OCI-LY7 (cell line): ENCODE measurements at regions of chr1 and their contacts with region 1.

Region 1: DNA sequence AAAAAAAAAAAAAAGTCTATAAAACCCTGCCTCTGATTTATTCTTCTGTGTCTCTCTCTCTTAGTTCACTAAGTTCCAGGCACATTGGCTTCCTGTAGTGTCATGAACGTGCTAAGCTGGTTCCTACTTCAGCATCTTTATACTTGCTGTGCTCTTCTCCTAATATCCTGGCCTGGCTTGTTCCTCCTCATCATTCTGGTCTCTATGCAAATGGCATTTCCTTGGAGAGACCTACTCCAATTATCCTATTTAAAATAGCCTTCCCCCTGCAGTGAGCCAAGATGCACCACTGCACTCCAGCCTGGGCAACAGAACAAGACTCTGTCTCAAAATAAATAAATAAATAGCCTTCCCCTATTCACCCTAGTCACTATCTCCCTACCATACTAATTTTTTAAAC is 9.7 kb upstream of the CLCC1 start:
- DNase-seq: no peak
- H3K4me3 ChIP-seq: no peak overlapping the region
- H3K27ac ChIP-seq: no peak overlapping the region
- H3K4me1 ChIP-seq: no peaks in the 10 kb centered on the region
- CTCF ChIP-seq: no peak

Region 2: DNA sequence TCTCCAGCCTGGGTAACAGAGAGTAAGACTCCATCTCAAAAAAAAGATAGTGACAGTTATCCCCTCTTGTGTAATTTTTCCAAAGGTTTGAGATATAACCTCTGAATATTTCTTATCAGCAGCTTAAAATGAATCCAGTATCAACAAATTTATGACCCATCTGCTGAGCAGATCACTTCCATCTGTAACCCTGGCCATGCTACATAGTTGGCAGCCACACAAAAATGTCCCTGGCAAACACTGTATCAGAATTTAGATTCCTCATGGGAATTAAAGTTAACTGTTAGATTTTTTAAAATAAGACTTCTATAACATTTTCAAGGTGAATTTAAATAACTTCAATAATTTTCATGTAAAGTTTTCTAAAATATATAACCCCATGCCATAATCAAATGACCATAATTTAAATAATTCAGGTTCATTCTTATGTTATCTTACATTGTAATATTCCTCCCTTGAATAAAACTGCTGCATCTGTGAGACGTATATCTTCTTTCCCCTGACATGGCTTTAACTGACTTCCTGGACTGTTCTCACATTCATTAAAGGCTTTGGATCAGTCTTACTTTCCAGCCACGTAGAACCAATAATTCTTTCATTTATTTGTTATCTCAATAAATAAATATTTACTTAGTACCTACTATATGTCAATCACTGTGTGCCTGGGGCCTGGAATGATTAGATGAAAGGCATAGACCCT is 286.2 kb before region 1 on chr1:
- CTCF ChIA-PET with region 1: no interaction called
- POLR2A ChIA-PET with region 1: no interaction called
- intact Hi-C with region 1: no loop called
- DNase-seq: no peak
- H3K4me3 ChIP-seq: no peak overlapping the region
- H3K27ac ChIP-seq: no peak overlapping the region
- H3K4me1 ChIP-seq: peaks cover 10% of the 10 kb centered on the region
- CTCF ChIP-seq: no peak

Region 3: DNA sequence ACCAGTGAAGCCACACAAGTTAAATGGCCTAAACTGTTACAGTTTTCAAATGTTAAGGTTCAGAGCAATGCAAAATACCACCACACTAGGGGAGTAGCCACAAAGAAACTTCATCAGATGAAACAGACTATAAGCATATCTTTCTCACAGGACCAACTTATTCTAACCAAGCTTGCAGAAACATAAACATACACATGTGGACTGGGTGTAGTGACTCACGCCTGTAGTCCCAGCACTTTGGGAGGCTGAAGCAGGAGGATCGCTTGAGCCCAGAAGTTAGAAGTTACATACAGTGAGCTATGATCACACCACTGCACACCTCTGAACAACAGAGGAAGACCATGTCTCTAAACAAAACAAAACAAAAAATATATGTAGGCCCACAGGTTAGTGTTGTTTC is 51.7 kb after region 1 on chr1:
- CTCF ChIA-PET with region 1: no interaction called
- POLR2A ChIA-PET with region 1: no interaction called
- intact Hi-C with region 1: loop called (anchors 5 kb)
- DNase-seq: no peak
- H3K4me3 ChIP-seq: no peak overlapping the region
- H3K27ac ChIP-seq: no peak overlapping the region
- H3K4me1 ChIP-seq: no peaks in the 10 kb centered on the region
- CTCF ChIP-seq: no peak

Region 4: DNA sequence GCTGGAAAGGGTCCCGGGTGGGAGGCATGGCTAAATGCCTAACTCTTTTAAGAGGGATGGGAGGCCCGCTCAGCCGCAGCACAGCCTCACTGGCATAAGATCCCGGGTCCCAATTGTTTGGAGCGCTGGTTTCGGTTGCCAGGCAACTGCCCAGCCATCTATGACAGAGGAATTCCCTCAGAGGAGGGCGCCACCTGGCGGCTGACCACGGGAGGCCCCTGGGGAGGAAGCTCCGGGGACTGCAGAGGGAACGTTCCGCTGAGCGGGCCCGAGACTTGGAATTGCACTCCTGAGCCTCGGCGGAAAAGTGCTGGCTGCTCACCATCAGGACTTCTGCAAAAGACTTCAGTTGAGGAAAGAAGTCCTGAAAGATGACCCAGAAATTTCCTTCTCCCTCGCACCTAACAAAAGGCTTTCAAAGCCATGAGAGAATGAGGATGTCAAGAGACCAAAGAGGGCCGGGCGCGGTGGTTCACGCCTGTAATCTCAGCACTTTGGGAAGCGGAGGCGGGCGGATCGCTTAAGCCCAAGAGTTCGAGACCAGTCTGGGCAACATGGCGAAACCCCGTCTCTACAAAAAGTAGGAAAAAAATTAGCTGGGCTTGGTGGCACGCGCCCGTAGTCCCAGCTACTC is 139.8 kb after region 1 on chr1:
- CTCF ChIA-PET with region 1: no interaction called
- POLR2A ChIA-PET with region 1: no interaction called
- intact Hi-C with region 1: no loop called
- DNase-seq: peak; percentile 83
- H3K4me3 ChIP-seq: peak overlapping the region; percentile 16
- H3K27ac ChIP-seq: no peak overlapping the region
- H3K4me1 ChIP-seq: peaks cover 13% of the 10 kb centered on the region
- CTCF ChIP-seq: peak; percentile 95

Region 5: DNA sequence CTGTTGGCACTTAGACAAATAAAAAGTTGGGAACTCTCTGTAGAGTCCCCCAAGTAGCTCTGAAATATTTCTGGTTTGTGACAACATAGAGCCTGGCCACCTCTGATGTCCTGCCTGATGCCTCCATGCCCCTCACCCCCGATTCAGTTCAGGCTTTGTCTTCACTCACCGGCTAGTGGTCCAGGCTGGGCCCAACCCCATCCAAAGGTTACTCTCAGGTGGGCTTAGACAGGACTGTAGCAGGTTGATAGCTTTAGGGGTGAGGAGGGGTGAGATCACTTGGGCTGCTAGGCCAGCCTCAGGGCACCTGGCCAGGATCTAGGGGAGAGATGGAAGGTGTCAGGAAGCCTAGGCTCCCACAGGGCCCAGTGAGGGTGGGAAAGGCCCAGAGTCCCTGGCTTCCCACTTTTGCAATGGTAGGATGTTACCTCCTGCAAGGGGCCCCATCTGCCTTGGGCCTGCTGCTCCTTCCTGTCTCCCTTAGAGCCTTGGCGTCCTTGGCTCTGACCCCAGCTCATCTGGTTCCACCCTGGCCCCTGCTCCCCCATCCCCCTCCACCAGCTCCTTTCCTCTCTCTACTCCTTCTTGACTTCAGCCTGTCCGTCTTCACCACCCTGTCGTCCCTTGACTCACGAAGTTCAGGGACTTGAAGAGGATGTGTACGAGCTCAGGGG is 784.0 kb after region 1 on chr1:
- CTCF ChIA-PET with region 1: no interaction called
- POLR2A ChIA-PET with region 1: no interaction called
- intact Hi-C with region 1: no loop called
- DNase-seq: no peak
- H3K4me3 ChIP-seq: no peak overlapping the region
- H3K27ac ChIP-seq: no peak overlapping the region
- H3K4me1 ChIP-seq: no peaks in the 10 kb centered on the region
- CTCF ChIP-seq: no peak